PC-3 (cell line): ENCODE measurements at regions of chr21 and their contacts with region 1.

Region 1: DNA sequence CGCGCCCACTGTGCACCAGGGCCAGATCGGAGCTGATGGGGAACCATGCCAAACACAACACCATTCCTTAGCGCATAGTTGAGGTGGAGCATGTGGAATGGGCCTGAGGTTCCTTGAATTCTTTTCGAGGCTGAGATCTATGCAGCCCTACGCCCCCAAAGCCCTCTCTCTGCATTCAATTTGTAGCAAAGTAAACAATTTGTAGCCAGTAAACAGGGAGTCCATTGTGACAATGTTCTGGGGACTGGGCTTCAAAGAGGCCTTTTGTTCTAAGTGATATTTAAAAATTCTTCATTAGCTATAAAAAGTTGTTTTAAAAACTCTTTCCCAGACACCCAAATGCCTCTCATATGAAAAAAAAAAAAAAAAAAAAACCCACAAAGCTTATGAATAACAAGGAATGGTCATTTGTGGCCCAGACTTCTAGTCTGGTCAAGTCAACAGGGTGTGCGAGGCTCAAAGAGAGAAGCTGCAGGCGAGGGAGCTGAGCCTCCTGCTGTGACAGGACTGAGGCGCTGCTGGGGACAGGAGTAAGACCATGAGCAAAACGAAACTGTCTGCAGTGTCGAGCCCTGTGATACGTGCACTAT is 30.6 kb upstream of the KCNE2 start:
- DNase-seq: no peak
- ATAC-seq: no peak
- H3K4me3 ChIP-seq: no peak overlapping the region
- H3K27ac ChIP-seq: no peak overlapping the region
- H3K4me1 ChIP-seq: no peaks in the 10 kb centered on the region
- H3K27me3 ChIP-seq: peaks cover 7% of the 10 kb centered on the region; the same call in 1 of the 2 replicates
- CTCF ChIP-seq: no peak

Region 2: GRCh38 chr21:34235514-34235913 is 97.7 kb before region 1 on chr21:
- CTCF ChIA-PET with region 1: no interaction called
- POLR2A ChIA-PET with region 1: no interaction called
- intact Hi-C with region 1: no loop called
- DNase-seq: no peak
- ATAC-seq: no peak
- H3K4me3 ChIP-seq: no peak overlapping the region
- H3K27ac ChIP-seq: no peak overlapping the region
- H3K4me1 ChIP-seq: no peaks in the 10 kb centered on the region
- H3K27me3 ChIP-seq: peaks cover 22% of the 10 kb centered on the region
- CTCF ChIP-seq: no peak

Region 3: GRCh38 chr21:35775778-35776515 is 1442.7 kb after region 1 on chr21:
- CTCF ChIA-PET with region 1: no interaction called
- POLR2A ChIA-PET with region 1: interaction called, 14 read pairs
- intact Hi-C with region 1: no loop called
- DNase-seq: peak; percentile 74
- ATAC-seq: peak; percentile 67
- H3K4me3 ChIP-seq: no peak overlapping the region
- H3K27ac ChIP-seq: peak overlapping the region; percentile 80
- H3K4me1 ChIP-seq: peaks cover 40% of the 10 kb centered on the region
- H3K27me3 ChIP-seq: no peaks in the 10 kb centered on the region
- CTCF ChIP-seq: no peak